Activated T-helper 1 cell treated with anti-CD3 and anti-CD28 coated beads, Interleukin-12 subunit alpha, Interleukin-12 subunit beta, Interleukin-2, Interleukin-4 antibody, amounts not matched to agents 30 ng/mL and 10 ng/mL and 1 ng/mL, durations not matched to agents 14 hours and 24 hours and 36 hours (primary cell): ENCODE measurements at regions of chrX and their contacts with region 1.

Region 1: DNA sequence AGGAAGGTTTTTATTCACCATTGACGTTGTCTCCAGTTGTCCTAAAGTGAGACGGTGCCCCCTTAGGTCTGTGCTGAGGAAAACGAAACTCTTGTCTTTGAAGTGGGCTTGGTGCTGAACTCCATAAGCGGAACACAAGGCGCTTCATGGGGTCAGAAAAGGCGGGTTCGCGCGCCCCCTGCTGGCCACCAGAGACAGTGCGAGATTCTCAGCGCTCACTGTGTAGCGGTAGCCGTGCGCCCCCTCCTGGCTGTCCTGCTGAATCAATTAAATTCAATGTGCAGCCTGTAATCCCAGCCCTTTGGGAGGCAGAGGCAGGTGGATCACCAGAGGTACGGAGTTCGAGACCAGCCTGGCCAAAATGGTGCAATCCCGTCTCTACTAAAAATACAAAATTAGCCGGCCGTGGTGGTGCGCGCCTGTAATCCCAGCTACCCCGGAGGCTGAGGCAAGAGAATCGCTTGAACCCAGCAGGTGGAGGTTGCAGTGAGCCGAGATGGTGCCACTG is 64.1 kb downstream of the RLIM start:
- DNase-seq: peak; percentile 66
- H3K4me3 Mint-ChIP-seq: no peak overlapping the region
- H3K27ac Mint-ChIP-seq: no peak overlapping the region
- H3K4me1 Mint-ChIP-seq: peaks cover 5% of the 10 kb centered on the region
- H3K27me3 Mint-ChIP-seq: no peaks in the 10 kb centered on the region

Region 2: GRCh38 chrX:74343343-74344279 is 206.7 kb before region 1 on chrX:
- intact Hi-C with region 1: loop called (anchors 1 kb)
- DNase-seq: peak; percentile 21
- H3K4me3 Mint-ChIP-seq: no peak overlapping the region
- H3K27ac Mint-ChIP-seq: no peak overlapping the region
- H3K4me1 Mint-ChIP-seq: no peaks in the 10 kb centered on the region
- H3K27me3 Mint-ChIP-seq: no peaks in the 10 kb centered on the region

Region 3: DNA sequence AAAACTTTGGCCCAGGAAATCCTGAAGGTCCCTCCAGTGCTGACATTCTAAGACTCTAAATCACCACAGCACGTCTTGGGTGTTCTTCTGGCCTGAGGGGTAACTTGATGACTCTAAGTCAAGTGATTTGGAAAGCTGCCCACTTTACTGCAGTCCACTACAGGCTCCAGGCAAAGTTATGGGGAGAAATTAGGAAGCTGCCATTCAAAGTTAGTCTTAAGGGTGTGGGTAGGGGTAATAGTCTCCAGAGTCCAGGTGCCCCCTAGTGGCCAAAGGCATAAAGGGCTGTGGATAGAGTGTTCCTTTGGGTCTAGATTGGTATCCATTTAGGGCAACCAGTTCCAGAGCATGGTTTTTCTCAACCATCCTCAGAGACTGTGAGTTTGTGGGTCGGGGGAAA is 167.7 kb before region 1 on chrX:
- intact Hi-C with region 1: loop called (anchors 1 kb)
- DNase-seq: peak; percentile 7
- H3K4me3 Mint-ChIP-seq: no peak overlapping the region
- H3K27ac Mint-ChIP-seq: no peak overlapping the region
- H3K4me1 Mint-ChIP-seq: no peaks in the 10 kb centered on the region
- H3K27me3 Mint-ChIP-seq: no peaks in the 10 kb centered on the region

Region 4: DNA sequence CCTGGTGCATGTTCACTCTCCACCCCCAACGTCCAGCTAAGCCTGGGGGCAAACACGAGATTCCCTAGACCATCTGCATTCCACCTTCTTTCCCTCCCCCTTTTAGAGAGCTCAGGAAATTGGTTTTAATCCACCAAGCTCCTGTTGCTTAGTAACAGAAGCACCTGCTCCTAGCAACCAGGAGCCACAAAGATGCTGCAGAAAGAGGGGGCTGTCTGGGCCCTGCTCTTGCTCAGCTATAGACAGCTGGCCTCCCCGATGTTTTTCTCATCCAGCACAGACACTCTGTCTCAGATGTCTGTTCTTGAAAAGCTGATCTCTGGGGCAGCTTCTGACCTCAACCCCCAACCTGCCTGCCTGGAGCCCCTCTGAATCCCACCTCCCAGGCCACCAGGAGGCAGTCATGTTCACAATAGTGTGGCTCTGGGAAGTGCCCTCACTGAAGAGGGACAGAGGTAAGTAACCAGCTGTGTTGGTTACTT is 57.6 kb before region 1 on chrX:
- intact Hi-C with region 1: loop called (anchors 1 kb)
- DNase-seq: no peak
- H3K4me3 Mint-ChIP-seq: no peak overlapping the region
- H3K27ac Mint-ChIP-seq: no peak overlapping the region
- H3K4me1 Mint-ChIP-seq: no peaks in the 10 kb centered on the region
- H3K27me3 Mint-ChIP-seq: no peaks in the 10 kb centered on the region

Region 5: GRCh38 chrX:74536152-74536831 is 14.1 kb before region 1 on chrX:
- intact Hi-C with region 1: loop called (anchors 1 kb)
- DNase-seq: peak; percentile 7
- H3K4me3 Mint-ChIP-seq: peak overlapping the region; percentile 77
- H3K27ac Mint-ChIP-seq: peak overlapping the region; percentile 23
- H3K4me1 Mint-ChIP-seq: peaks cover 37% of the 10 kb centered on the region
- H3K27me3 Mint-ChIP-seq: no peaks in the 10 kb centered on the region